Mammary epithelial cell (primary cell): ENCODE measurements at regions of chr10 and their contacts with region 1.

Region 1: DNA sequence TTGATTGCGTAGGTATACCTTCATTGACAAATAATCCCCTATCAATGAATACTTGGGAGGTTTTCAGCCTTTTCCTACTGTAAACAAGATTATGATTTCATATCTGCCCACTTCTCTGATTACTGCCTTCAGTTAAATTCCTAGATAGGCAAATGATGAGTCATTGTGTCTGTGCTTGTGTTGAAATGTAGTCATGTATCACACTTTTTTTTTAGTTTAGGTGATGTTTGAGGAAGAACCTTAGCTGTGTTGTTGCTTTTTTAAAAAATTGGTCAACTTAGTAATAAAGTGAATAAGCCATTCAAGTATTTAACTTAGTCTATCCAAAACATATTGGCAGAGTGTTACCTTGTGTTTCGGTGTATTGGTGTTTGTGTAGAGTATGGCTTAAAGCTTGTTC is 60.0 kb downstream of the WAC start:
- DNase-seq: peak; percentile 68
- H3K4me3 ChIP-seq: no peak overlapping the region
- H3K27ac ChIP-seq: peak overlapping the region; percentile 26
- H3K4me1 ChIP-seq: peaks cover 20% of the 10 kb centered on the region
- H3K27me3 ChIP-seq: no peaks in the 10 kb centered on the region
- CTCF ChIP-seq: no peak

Region 2: DNA sequence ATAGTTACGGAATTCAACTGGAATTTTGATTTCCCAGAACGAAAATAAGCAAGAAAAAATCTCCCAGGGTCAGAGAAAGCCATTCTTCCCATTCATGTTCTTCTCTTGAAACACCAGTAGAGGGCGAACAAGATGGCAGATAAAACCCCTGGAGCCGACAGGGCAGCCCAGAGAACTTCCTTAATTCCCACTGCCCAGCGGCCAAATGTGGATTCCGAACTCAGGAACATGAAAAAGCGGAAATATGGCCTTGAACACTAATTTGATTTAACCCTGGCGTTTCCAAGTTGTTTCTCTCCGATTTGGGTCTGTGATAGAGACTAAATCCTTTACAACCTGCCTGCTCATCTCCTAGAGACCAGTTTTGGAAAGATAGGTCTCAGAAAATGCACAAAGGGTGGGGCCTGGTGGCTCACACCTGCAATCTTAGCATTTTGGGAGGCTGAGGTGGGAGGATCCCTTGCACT is 160.7 kb before region 1 on chr10:
- CTCF ChIA-PET with region 1: no interaction called
- dilution Hi-C with region 1: no loop called
- in situ Hi-C with region 1: no loop called
- intact Hi-C with region 1: no loop called
- DNase-seq: peak; percentile 43
- H3K4me3 ChIP-seq: no peak overlapping the region
- H3K27ac ChIP-seq: no peak overlapping the region
- H3K4me1 ChIP-seq: no peaks in the 10 kb centered on the region
- H3K27me3 ChIP-seq: no peaks in the 10 kb centered on the region
- CTCF ChIP-seq: peak; percentile 69 to 82

Region 3: DNA sequence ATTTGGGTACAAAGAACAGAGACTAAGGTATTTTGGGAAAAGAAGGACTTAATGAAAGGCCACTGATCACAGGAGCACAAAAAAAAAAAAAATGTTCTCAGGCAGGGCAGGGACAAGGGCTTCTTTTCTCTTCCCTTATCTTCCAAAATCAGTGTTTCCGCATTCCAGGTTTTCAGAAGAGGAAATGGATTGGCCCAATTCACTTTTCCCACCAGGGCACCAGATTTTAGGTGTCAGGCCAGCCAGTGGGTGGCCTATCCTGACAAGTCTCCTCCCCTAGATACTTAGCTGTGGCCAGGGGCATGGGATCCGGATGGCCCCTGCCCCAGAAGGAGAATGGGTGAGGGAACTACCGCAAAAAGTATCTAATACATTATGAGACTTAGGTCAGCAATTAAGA is 148.9 kb before region 1 on chr10:
- CTCF ChIA-PET with region 1: no interaction called
- dilution Hi-C with region 1: no loop called
- in situ Hi-C with region 1: no loop called
- intact Hi-C with region 1: loop called (anchors 10 kb)
- DNase-seq: no peak
- H3K4me3 ChIP-seq: no peak overlapping the region
- H3K27ac ChIP-seq: no peak overlapping the region
- H3K4me1 ChIP-seq: no peaks in the 10 kb centered on the region
- H3K27me3 ChIP-seq: no peaks in the 10 kb centered on the region
- CTCF ChIP-seq: no peak

Region 4: DNA sequence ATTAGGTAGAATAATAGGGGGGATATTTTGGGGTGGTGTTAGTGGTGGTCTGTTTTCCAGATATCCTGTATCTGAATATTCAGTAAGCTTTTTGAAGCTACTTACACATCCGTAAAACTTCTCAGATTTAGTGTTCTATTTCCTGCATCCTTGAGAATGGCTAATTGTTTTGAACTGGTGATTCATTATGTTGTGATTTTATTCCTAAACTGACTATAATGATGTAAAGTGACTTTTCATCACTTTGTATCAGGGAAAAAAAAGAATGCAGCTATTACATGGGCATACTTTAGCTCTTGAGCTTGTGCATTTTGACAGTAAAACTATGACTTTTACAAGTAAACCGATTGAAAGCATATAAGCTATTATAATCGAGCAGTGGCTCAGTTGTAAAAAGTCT is 41.8 kb before region 1 on chr10:
- CTCF ChIA-PET with region 1: no interaction called
- dilution Hi-C with region 1: no loop called
- in situ Hi-C with region 1: no loop called
- intact Hi-C with region 1: loop called (anchors 5 kb)
- DNase-seq: no peak
- H3K4me3 ChIP-seq: no peak overlapping the region
- H3K27ac ChIP-seq: no peak overlapping the region
- H3K4me1 ChIP-seq: no peaks in the 10 kb centered on the region
- H3K27me3 ChIP-seq: no peaks in the 10 kb centered on the region
- CTCF ChIP-seq: no peak

Region 5: DNA sequence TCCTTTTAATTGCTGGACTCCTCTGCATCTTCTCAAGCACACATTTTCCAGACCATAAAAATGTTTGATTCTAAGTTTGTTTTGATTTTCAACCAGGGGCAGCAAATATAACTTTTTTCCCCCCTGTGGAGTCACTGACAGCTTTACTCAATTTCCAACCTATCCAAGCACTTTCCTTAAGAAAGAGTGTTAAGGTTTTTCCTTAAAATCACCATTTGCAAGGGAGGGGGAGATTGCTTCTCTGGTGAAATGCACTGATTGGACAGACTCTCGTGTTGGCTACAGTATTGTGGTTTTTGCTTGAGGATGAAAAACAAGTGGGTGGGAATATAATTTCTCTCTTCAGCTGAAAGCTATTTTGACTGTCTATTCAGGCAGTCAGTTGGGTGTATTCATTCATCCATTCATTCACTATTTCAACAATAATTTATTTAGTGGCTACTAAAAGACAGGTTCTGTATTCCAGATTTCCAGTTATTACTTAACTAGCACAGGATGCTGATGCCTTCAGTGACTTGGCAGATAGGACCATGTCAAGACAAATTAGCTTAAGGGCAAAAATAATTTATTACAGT is 230.7 kb after region 1 on chr10:
- CTCF ChIA-PET with region 1: no interaction called
- dilution Hi-C with region 1: no loop called
- in situ Hi-C with region 1: no loop called
- intact Hi-C with region 1: no loop called
- DNase-seq: no peak
- H3K4me3 ChIP-seq: no peak overlapping the region
- H3K27ac ChIP-seq: no peak overlapping the region
- H3K4me1 ChIP-seq: no peaks in the 10 kb centered on the region
- H3K27me3 ChIP-seq: no peaks in the 10 kb centered on the region
- CTCF ChIP-seq: no peak